GM13977 (cell line): ENCODE measurements at regions of chr5 and their contacts with region 1.

Region 1: GRCh38 chr5:6632917-6633468 is at the starts of genes NSUN2 and SRD5A1:
- DNase-seq: peak; percentile 99
- CTCF ChIP-seq: no peak

Region 2: GRCh38 chr5:6745706-6746222 is 112.8 kb after region 1 on chr5:
- in situ Hi-C with region 1: loop called (anchors 25 kb)
- DNase-seq: peak; percentile 72
- CTCF ChIP-seq: peak; percentile 75

Region 3: DNA sequence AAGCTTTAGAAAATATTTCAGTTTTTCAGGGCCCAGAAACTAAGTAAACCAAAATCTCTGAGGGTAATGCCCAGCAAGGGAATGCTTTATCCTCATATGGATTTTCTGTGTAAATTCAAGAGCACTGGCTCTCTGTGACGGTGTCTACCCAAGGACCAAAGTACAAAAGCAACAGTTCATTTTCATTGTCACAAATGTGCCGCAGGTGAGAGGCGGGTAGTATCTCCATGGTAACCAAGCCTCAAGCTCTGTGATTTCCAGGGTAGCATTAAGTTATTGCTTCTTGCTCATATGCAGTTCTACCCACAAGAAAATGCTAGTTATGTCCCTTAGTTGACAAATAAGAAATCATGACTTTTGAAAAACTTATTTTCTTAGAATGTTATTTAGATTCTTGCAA is 1400.3 kb after region 1 on chr5:
- in situ Hi-C with region 1: no loop called
- DNase-seq: no peak
- CTCF ChIP-seq: no peak